Psoas muscle (tissue), 8 donors: ENCODE measurements at regions of chr7 and their contacts with region 1.

Region 1: GRCh38 chr7:46153951-46154787 is 233.1 kb upstream of the IGFBP3 start:
- DNase-seq: peak in 1 of 2 donors; percentile 20
- ATAC-seq: peak in 1 of 4 donors; percentile 16
- H3K4me3 ChIP-seq: no peak overlapping the region
- H3K27ac ChIP-seq: no peak overlapping the region
- H3K4me1 ChIP-seq: no peaks in the 10 kb centered on the region
- H3K27me3 ChIP-seq: no peaks in the 10 kb centered on the region
- CTCF ChIP-seq: no peak

Region 2: DNA sequence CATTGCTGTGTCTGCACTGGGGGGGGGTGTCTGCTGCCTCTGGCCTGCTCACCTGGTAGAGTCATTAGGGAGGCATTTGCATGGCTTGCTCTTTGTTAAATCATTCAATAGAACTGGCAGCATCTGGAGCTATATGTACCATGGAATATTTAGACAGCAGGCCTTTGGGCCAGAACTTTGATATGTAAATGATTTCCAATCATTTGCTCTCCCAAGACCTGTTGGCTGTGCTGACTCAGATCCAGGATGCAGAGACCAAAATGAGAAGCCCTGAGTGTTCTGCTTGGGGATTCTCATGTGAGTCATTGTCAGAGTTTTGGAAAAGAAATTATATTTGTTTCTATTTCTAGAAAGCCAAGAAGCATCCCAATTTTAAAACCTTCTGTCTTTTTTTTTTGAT is 24.5 kb after region 1 on chr7:
- intact Hi-C with region 1: loop called in 1 of 2 experiments (anchors 1 kb)
- DNase-seq: no peak
- ATAC-seq: no peak
- H3K4me3 ChIP-seq: no peak overlapping the region
- H3K27ac ChIP-seq: no peak overlapping the region
- H3K4me1 ChIP-seq: no peaks in the 10 kb centered on the region
- H3K27me3 ChIP-seq: no peaks in the 10 kb centered on the region
- CTCF ChIP-seq: no peak